ENCODE measurements at regions of chr12 and their contacts with region 1.

Region 1: GRCh38 chr12:49347384-49348237 is 923 bp downstream of the DNAJC22 start:
- DNase-seq: peak; percentile 80
- H3K4me3 Mint-ChIP-seq: peak overlapping the region; percentile 57
- H3K27ac Mint-ChIP-seq: no peak overlapping the region
- H3K4me1 Mint-ChIP-seq: peaks cover 34% of the 10 kb centered on the region
- H3K27me3 Mint-ChIP-seq: peaks cover 71% of the 10 kb centered on the region

Region 2: DNA sequence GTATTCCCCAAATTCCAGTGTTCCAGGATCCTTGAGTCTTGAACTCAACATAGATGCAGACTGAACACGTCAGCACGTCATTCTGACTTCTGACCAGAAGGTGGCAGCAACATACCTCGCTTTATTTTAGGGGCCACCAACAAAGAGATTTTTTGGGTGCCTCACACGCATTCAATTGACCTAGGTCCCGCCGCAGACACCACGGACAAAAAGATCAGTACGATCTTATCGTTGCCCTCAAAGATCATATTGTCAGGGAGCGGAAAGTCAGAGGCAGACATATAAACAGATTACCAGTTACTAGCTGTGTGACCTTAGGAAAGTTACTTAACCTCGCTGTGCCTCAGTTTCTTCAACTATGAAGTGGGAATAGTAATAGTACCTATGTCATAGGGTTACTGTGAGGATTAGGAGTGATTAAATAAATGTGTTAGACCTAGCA is 59.2 kb before region 1 on chr12:
- CTCF ChIA-PET with region 1: interaction called, 161 read pairs
- POLR2A ChIA-PET with region 1: interaction called, 8 read pairs
- DNase-seq: peak; percentile 77
- H3K4me3 Mint-ChIP-seq: no peak overlapping the region
- H3K27ac Mint-ChIP-seq: no peak overlapping the region
- H3K4me1 Mint-ChIP-seq: peaks cover 8% of the 10 kb centered on the region
- H3K27me3 Mint-ChIP-seq: peaks cover 34% of the 10 kb centered on the region

Region 3: DNA sequence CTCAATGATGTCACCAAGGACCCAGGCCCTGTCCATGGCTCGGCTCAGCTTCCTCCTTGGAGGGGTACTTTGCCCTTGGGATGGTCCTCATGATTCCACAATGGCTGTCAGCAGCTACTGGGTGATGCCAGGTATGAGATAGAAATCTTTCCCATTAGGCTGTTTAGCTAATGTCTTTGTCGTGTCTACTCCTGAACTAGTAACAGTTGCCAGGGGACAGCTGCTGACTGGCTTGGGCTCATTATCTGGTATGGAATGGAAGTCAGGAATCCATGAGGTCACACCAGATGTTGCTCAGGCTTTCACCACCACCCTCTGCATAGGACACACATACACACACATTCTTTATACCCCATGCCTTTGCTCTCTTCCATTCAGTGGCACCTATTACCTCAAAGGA is 43.5 kb before region 1 on chr12:
- CTCF ChIA-PET with region 1: interaction called, 10 read pairs
- POLR2A ChIA-PET with region 1: interaction called, 3 read pairs
- DNase-seq: no peak
- H3K4me3 Mint-ChIP-seq: no peak overlapping the region
- H3K27ac Mint-ChIP-seq: no peak overlapping the region
- H3K4me1 Mint-ChIP-seq: peaks cover 9% of the 10 kb centered on the region
- H3K27me3 Mint-ChIP-seq: peaks cover 25% of the 10 kb centered on the region

Region 4: GRCh38 chr12:49331380-49332222 is 16.0 kb before region 1 on chr12:
- CTCF ChIA-PET with region 1: interaction called, 26 read pairs
- POLR2A ChIA-PET with region 1: interaction called, 6 read pairs
- DNase-seq: no peak
- H3K4me3 Mint-ChIP-seq: no peak overlapping the region
- H3K27ac Mint-ChIP-seq: no peak overlapping the region
- H3K4me1 Mint-ChIP-seq: peaks cover 4% of the 10 kb centered on the region
- H3K27me3 Mint-ChIP-seq: peaks cover 34% of the 10 kb centered on the region

Region 5: GRCh38 chr12:49336645-49337584 is 10.7 kb before region 1 on chr12 and contains the start of gene C1QL4:
- CTCF ChIA-PET with region 1: interaction called, 33 read pairs
- POLR2A ChIA-PET with region 1: interaction called, 6 read pairs
- DNase-seq: peak; percentile 87
- H3K4me3 Mint-ChIP-seq: peak within 1 kb of the TSS; percentile 59
- H3K27ac Mint-ChIP-seq: no peak within 1 kb of the TSS
- H3K4me1 Mint-ChIP-seq: peaks cover 19% of the 10 kb centered on the region
- H3K27me3 Mint-ChIP-seq: peaks cover 86% of the 10 kb centered on the region
- total RNA-seq, gene C1QL4: not detected

Region 6: GRCh38 chr12:49403971-49404450 is 56.4 kb after region 1 on chr12:
- CTCF ChIA-PET with region 1: no interaction called
- POLR2A ChIA-PET with region 1: no interaction called
- DNase-seq: no peak
- H3K4me3 Mint-ChIP-seq: no peak overlapping the region
- H3K27ac Mint-ChIP-seq: no peak overlapping the region
- H3K4me1 Mint-ChIP-seq: peaks cover 17% of the 10 kb centered on the region
- H3K27me3 Mint-ChIP-seq: no peaks in the 10 kb centered on the region

Region 7: GRCh38 chr12:49515266-49515665 is 167.7 kb after region 1 on chr12:
- CTCF ChIA-PET with region 1: interaction called, 16 read pairs
- POLR2A ChIA-PET with region 1: interaction called, 3 read pairs
- DNase-seq: no peak
- H3K4me3 Mint-ChIP-seq: no peak overlapping the region
- H3K27ac Mint-ChIP-seq: no peak overlapping the region
- H3K4me1 Mint-ChIP-seq: peaks cover 1% of the 10 kb centered on the region
- H3K27me3 Mint-ChIP-seq: no peaks in the 10 kb centered on the region

Measured in activated CD4-positive, alpha-beta memory T cell treated with anti-CD3 and anti-CD28 coated beads, Interleukin-2, amount 10 ng/mL, durations not matched to agents 7 days and 5 days (primary cell).